Right lobe of liver (tissue), 6 donors: ENCODE measurements at regions of chr19 and their contacts with region 1.

Region 1: GRCh38 chr19:33406521-33407139 is 33.1 kb downstream of the CEBPG start:
- DNase-seq: peak in 2 of 3 donors; percentile 73 to 85
- ATAC-seq: peak; percentile 47 to 54 (median 50)
- H3K4me3 ChIP-seq: no peak overlapping the region
- H3K27ac ChIP-seq: peak overlapping the region; percentile 82 to 99 (median 96)
- H3K4me1 ChIP-seq: peaks cover 0 to 52% (median 28%) of the 10 kb centered on the region in 4 donors
- H3K27me3 ChIP-seq: no peaks in the 10 kb centered on the region
- CTCF ChIP-seq: peak; percentile 89 to 97 (median 94)
- POLR2A ChIP-seq: no peak

Region 2: DNA sequence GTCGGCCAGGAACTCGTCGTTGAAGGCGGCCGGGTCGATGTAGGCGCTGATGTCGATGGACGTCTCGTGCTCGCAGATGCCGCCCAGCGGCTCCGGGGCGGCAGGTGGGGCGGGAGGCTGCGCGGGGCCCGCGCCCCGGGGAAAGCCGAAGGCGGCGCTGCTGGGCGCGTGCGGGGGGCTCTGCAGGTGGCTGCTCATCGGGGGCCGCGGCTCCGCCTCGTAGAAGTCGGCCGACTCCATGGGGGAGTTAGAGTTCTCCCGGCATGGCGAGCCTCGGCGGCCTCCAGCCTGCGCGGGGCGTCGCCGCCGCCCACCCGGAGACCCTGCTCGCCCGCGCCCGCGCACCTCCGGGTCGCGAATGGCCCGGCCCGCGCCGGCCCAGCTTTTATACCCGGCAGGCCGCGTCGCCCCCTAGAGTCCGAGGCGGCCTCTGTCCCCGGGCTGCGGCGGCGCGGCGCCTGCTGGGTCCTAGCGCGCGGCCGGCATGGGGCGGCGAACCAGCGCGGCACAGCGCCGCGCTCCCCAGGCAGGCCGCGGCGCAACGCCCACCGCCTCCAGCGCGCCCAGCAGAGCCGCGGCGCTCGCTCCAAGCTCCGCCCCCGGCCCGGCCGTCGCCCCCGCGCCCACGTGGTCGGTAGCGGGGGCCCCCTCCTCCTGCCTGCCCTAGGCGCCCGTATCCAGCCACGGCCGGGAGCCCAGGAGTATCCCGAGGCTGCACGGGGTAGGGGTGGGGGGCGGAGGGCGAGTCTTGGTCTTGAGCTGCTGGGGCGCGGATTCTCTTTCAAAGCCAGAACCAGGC is 104.3 kb before region 1 on chr19 and contains the start of gene CEBPA:
- intact Hi-C with region 1: loop called (anchors 5 to 10 kb)
- DNase-seq: peak; percentile 89 to 94 (median 93)
- ATAC-seq: peak; percentile 55 to 77 (median 64)
- H3K4me3 ChIP-seq: peak within 1 kb of the TSS; percentile 86 to 96 (median 93)
- H3K27ac ChIP-seq: peak within 1 kb of the TSS; percentile 94 to 99 (median 95)
- H3K4me1 ChIP-seq: peaks cover 0 to 53% (median 8%) of the 10 kb centered on the region in 4 donors
- H3K27me3 ChIP-seq: no peaks in the 10 kb centered on the region
- CTCF ChIP-seq: peak; percentile 35 to 88 (median 52)
- POLR2A ChIP-seq: peak; percentile 100
- total RNA-seq, gene CEBPA: 53.9 to 163 (median 119) TPM

Region 3: DNA sequence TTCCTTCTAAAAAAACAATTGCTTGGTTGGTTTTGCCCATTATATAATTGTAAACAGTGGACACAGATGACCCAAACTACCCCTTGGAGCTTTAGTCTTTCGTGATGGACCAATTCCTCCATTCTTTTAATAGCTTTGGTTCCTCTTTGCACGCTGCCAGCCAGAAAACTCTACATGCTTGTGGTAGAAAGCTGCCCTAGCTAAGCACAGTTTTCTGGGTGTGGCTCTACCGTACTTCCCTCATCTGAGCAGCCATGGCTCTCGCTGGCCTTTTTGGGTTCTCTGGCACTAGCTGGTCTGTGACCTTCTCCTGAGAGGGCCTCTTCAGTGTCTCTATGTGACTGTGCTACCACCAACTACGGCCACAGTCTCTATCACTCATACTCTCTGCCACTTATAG is 74.4 kb before region 1 on chr19:
- intact Hi-C with region 1: loop called in 1 of 2 experiments (anchors 10 kb)
- DNase-seq: no peak
- ATAC-seq: peak in 3 of 4 donors; percentile 6 to 24 (median 19)
- H3K4me3 ChIP-seq: no peak overlapping the region
- H3K27ac ChIP-seq: no peak overlapping the region
- H3K4me1 ChIP-seq: peaks cover 0 to 37% (median 13%) of the 10 kb centered on the region in 4 donors
- H3K27me3 ChIP-seq: no peaks in the 10 kb centered on the region
- CTCF ChIP-seq: no peak
- POLR2A ChIP-seq: no peak

Region 4: DNA sequence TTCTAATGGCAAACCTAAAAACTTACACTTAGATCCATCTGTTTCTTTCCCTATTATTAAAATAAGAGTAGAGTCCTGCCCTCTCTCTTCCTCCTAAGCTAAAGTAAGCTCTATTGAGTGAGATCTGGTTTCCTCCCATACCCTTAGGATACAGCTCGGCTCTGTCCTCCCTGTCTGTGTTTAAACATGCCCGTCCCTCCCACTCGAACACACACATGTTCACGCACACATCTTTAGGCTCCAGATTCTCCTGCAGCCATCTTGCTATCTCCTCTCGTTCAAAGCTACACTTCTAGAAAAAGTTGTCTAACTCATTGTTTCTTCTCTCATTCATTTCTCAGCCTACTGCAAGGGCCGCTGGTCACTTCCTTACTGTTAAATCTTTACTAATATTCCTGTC is 48.2 kb before region 1 on chr19:
- intact Hi-C with region 1: no loop called
- DNase-seq: no peak
- ATAC-seq: no peak
- H3K4me3 ChIP-seq: no peak overlapping the region
- H3K27ac ChIP-seq: no peak overlapping the region
- H3K4me1 ChIP-seq: no peaks in the 10 kb centered on the region
- H3K27me3 ChIP-seq: no peaks in the 10 kb centered on the region
- CTCF ChIP-seq: no peak
- POLR2A ChIP-seq: no peak